GM10248 (cell line): ENCODE measurements at regions of chr7 and their contacts with region 1.

Region 1: DNA sequence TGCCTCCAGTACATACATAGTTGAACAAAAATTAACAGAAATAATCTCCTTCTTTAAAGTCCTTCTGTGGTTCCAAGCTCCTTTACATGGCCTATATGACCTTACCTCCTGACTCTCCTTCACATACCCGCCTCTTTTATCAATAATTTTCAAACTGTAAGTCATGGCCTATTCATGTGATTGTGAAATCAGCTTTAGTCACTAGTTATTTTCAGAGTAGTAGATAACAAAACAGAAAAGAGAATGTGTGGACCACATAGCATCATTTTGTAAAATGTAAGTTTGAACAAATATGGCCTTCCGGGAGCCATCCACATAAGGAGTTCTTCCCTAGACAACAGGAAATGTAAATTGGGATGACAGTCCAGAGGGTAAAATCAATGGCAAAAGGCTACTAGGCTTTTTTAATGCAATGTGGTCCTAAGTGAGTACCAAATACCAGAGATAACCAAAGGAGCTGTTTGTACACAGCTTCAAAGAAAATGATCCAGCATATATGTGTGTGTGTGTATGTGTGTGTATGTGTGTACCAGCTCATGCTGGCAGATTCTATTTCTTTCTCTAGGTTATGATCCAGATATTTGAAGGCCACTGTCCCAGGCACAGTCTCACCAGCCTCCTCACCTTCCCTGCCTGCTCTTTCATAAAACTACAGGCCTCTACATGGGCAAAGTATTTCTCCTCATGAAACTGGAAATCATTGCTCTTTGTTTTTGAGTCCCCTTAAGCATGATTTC is 12.3 kb upstream of the FAM133B start:
- DNase-seq: no peak
- CTCF ChIP-seq: no peak

Region 2: GRCh38 chr7:92391071-92391470 is 211.4 kb before region 1 on chr7:
- CTCF ChIA-PET with region 1: no interaction called
- POLR2A ChIA-PET with region 1: no interaction called
- DNase-seq: no peak
- CTCF ChIP-seq: no peak

Region 3: GRCh38 chr7:92590711-92591310 is 11.7 kb before region 1 on chr7:
- CTCF ChIA-PET with region 1: interaction called, 19 read pairs
- POLR2A ChIA-PET with region 1: no interaction called
- DNase-seq: no peak
- CTCF ChIP-seq: no peak